ENCODE measurements at regions of chr2 and their contacts with region 1.

Region 1: GRCh38 chr2:17035010-17035409 is 369.4 kb upstream of the CYRIA start:
- DNase-seq: no peak
- ATAC-seq: no peak

Region 2: DNA sequence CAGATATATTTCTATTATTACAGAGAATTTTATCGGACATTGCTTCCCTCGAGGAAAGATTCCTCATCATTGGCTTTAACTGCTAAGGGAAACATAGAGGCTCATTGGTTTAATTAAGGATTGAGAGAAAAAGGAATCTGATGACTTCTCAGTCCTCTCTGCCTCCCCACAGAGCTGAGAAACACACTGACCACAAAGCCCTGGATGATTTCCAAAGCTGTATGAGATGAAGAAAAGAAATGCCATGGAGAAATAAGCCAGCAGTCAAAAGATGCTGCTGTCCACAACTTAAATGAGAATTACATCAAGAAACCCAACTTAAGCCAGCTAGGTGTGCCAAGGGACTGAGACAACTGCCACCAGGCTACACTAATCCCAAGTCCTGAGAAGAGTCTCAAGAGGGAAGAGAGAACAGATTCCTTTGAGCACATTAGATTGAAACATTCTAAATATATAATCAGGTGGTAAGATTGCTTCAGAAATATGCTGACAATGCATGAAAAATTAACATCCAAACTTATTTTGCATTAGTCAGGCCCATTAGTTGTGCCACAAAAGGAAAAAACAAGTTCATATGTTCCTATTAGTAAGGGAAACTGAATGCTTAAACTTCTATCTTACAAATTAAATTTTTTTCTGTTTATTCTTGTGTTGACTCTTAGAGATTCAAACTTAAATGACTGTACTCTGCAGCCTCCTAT is 61.3 kb before region 1 on chr2:
- intact Hi-C with region 1: no loop called
- DNase-seq: no peak
- ATAC-seq: no peak

Region 3: DNA sequence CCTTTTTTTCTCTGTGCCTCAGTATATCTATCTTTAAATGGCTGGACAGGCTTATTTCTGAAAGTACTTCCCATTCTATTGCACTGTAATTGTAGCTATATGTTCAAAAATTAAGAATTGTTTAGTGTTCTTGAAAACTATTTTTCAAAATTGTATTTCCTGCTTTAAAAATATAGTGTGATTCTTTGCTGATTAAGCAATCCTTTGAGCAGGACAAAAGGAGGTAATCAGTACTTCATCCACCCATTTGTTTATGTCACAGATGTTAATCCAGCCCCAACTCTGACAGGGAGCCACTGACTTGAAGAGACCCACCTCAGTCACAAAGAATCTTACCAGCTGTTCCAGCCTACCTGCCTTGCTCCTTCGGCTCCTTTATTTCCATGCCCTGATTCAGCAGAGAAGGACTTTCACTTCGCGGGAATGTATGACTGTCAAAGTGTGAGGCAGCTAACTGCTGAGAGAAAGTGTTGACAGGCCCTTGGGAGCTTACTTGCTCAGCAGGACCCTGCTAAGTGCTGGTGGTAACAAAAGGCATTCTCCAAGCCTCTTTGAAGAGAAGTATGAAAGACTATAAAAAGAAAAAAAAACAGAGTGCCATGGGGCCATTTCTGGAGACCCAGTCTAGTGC is 23.9 kb after region 1 on chr2:
- intact Hi-C with region 1: loop called (anchors 1 kb)
- DNase-seq: no peak
- ATAC-seq: no peak

Region 4: GRCh38 chr2:17083902-17084301 is 48.9 kb after region 1 on chr2:
- intact Hi-C with region 1: no loop called
- DNase-seq: no peak
- ATAC-seq: no peak

Region 5: GRCh38 chr2:17101596-17101995 is 66.6 kb after region 1 on chr2:
- intact Hi-C with region 1: no loop called
- DNase-seq: no peak
- ATAC-seq: no peak

Region 6: DNA sequence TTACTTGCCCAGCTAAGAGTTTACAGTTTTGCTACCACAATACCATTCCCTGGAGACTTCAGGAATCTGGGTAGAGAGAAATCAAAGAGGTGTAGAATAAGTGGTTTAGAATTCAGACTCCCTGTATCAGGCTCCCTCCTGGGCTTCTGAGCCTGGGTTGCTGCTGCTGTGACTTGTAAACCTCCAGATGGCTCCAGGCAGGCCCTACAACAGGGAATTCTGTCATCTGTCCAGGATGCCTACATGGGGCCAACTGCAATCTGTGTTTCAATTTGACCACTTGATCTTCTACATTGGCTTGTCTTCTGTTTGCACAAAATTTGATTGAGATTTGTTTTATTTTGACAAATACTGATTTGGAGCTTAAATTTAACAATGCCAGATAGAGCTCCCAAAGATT is 299.3 kb after region 1 on chr2:
- intact Hi-C with region 1: no loop called
- DNase-seq: no peak
- ATAC-seq: no peak

Measured in Right ventricle myocardium inferior (tissue), 1 donor.